GM10248 (cell line): ENCODE measurements at regions of chr9 and their contacts with region 1.

Region 1: DNA sequence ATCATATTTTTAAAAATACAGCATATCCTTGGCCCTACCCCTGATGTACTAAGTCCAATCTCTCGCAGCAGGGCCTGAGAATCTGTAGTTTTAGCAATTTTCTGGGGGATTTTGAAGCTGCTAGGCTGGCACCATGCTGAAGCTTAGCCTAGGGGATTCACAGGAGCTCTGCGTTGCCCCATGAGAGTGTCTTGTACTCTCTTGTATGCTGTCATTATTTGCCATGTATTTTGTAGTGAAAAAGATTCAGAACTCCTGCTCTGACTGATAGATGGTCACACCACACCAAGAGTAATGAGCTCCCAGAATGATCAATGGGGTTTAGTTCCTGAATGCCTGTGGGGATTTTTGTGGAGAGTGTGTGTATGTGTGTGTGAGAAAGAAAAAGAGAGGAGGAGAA is 20.7 kb upstream of the TRMT10B start:
- DNase-seq: no peak
- CTCF ChIP-seq: no peak

Region 2: DNA sequence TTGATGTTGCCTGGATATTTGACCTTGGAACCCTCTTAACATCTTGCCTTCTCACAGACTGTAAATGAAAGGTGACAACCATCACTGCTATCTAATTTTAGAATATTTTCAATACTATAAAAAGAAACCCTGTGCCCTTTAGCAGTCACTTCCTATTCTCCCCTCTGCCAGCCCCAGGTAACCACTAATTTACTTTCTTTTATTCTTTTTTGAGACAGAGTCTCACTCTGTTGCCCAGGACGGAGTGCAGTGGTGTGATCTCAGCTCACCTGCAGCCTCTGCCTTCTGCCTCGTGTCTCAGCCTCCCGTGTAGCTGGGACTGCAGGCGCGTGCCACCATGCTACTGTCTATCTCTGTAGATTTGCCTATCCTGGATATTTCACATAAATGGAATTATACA is 38.6 kb before region 1 on chr9:
- CTCF ChIA-PET with region 1: no interaction called
- POLR2A ChIA-PET with region 1: no interaction called
- DNase-seq: no peak
- CTCF ChIP-seq: no peak

Region 3: DNA sequence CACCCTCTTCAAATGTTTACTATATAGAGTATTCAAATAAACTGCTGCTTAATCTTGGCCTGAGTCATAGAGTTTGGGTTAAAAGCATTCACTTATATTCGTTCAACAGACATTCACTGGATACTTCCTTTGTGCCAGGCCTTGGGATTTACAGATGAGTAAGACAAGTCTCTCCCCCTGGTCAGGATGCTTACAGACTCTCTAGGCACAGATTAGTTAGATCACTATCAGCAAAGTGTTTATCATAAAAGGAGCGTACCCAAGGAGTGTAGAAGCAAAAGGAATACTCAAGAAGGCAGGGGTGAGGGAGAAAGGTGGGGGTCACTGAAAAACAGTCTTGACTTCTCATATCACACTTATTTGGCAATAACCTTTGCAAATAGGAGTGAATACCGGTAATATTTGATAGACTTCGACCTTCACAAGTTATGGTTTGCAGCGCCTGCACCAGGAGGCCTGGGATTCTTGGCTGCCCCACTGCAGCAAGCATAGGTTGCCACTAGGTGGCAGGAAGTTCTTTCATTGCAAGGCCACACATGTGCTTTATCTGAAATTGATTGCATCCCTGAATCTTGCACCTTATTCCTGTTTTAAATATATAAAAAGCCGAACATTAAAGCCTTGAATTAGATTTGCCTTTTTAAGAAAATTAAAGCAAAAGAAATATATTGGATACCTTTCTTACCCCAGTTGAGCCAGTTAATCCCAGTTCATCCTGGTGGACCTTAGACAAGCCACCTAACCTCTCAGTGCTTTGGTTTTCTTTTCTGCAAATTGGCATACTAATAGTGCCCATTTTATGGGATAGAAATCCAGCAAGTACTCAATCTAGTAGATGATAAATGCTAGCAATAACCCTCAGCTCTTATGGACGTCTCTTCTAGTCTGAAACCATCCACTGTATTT is 14.1 kb after region 1 on chr9:
- CTCF ChIA-PET with region 1: interaction called, 13 read pairs
- POLR2A ChIA-PET with region 1: no interaction called
- DNase-seq: peak; percentile 86
- CTCF ChIP-seq: peak; percentile 98

Region 4: DNA sequence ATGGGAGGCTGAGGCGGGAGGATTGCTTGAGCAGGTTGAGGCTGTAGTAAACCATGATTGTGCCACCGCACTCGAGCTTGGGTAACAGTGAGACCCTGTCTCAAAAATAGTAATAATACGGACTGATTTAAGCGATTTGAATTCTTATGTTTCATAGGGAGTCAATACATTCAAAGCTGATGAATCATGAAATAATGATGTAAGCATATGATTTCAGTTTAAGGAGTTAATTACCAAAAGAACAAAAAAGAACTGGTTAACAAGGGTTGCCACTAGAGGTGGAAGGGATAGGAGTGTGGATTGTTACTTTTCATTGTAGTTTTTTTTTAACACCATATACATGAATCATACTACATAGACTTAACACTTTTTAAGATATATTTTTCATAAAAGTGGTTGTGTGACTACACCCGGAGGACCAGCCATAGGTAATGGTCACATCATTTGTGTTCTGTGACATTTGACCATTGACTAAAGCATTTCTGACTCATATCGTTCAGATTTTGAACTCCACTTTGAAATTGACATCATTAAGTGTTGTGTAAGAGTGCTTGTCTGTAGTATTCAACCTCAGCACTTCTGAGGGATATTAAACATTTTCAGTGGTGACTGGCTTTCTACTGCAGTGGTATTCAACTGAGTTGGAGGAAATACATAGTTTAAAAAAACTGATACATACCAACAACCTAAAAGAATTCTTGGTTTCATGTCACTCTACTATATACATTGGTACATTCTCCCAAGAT is 27.6 kb after region 1 on chr9:
- CTCF ChIA-PET with region 1: no interaction called
- POLR2A ChIA-PET with region 1: no interaction called
- DNase-seq: no peak
- CTCF ChIP-seq: no peak